CD8-positive, alpha-beta T cell (primary cell): ENCODE measurements at regions of chr11 and their contacts with region 1.

Region 1: GRCh38 chr11:104623518-104623917 is 274.7 kb downstream of the CASP12 start:
- DNase-seq: no peak
- ATAC-seq: no peak
- H3K4me3 ChIP-seq: no peak overlapping the region
- H3K4me3 Mint-ChIP-seq: no peak overlapping the region
- H3K27ac ChIP-seq: no peak overlapping the region
- H3K27ac Mint-ChIP-seq: no peak overlapping the region
- H3K4me1 ChIP-seq: no peaks in the 10 kb centered on the region
- H3K4me1 Mint-ChIP-seq: no peaks in the 10 kb centered on the region
- H3K27me3 ChIP-seq: no peaks in the 10 kb centered on the region
- H3K27me3 Mint-ChIP-seq: no peaks in the 10 kb centered on the region
- CTCF ChIP-seq: no peak

Region 2: GRCh38 chr11:104784684-104785460 is 161.4 kb after region 1 on chr11:
- CTCF ChIA-PET with region 1: no interaction called
- POLR2A ChIA-PET with region 1: no interaction called
- intact Hi-C with region 1: loop called in 1 of 2 experiments (anchors 5 kb)
- DNase-seq: peak in 1 of 9 experiments; percentile 27
- ATAC-seq: no peak
- H3K4me3 ChIP-seq: no peak overlapping the region
- H3K4me3 Mint-ChIP-seq: no peak overlapping the region
- H3K27ac ChIP-seq: no peak overlapping the region
- H3K27ac Mint-ChIP-seq: no peak overlapping the region
- H3K4me1 ChIP-seq: peaks cover 5% of the 10 kb centered on the region
- H3K4me1 Mint-ChIP-seq: peaks cover 8% of the 10 kb centered on the region
- H3K27me3 ChIP-seq: no peaks in the 10 kb centered on the region
- H3K27me3 Mint-ChIP-seq: no peaks in the 10 kb centered on the region
- CTCF ChIP-seq: no peak

Region 3: DNA sequence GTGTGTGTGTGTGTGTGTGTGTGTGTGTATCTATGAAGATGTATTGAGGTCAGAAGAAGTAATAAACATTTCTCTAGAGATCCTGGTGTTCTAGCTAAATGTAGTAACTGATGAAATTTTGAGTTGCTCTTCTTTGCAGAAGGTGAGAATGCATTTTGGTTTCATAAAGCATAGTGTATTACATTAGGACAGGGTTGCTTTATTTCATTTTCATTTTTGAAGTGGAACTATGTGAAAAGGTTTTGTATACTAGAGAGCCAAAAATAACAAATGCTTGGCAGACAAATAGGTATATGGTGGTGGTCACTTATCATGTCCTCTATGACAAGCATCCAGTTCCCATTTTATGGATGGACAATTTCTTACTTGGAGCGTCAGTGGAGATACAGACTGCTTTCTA is 175.7 kb after region 1 on chr11:
- CTCF ChIA-PET with region 1: no interaction called
- POLR2A ChIA-PET with region 1: no interaction called
- intact Hi-C with region 1: loop called in 1 of 2 experiments (anchors 5 kb)
- DNase-seq: peak in 1 of 9 experiments; percentile 25
- ATAC-seq: peak; percentile 40
- H3K4me3 ChIP-seq: peak overlapping the region; percentile 0 to 45
- H3K4me3 Mint-ChIP-seq: peak overlapping the region; percentile 86
- H3K27ac ChIP-seq: peak overlapping the region in 1 of 2 experiments; percentile 59
- H3K27ac Mint-ChIP-seq: peak overlapping the region; percentile 90
- H3K4me1 ChIP-seq: peaks cover 13% of the 10 kb centered on the region
- H3K4me1 Mint-ChIP-seq: peaks cover 38% of the 10 kb centered on the region
- H3K27me3 ChIP-seq: no peaks in the 10 kb centered on the region
- H3K27me3 Mint-ChIP-seq: no peaks in the 10 kb centered on the region
- CTCF ChIP-seq: no peak